CD4-positive, alpha-beta T cell (primary cell): ENCODE measurements at regions of chr10 and their contacts with region 1.

Region 1: DNA sequence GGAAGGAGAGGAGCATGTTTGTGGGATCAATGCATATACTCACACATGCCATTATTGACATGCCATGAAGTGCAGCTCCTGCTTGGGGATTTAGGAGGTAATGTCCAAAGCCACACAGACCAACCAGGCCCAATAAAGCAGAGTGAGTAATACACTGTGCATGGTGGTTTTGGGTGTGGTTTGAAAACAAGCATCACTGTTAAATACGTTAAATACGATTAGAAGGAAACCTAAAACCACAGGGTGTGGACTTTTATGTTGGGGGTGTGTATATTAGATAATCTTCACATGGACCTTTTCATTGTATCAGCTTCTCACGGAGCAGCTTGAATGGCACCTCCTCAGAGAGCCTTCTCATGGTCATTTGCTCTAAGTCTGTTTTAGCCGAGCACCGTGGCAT is 10.4 kb upstream of the EIF3A start:
- DNase-seq: peak in 13 of 14 experiments; percentile 14 to 94 (median 43)
- ATAC-seq: peak; percentile 88
- H3K4me3 ChIP-seq: no peak overlapping the region
- H3K4me3 Mint-ChIP-seq: peak overlapping the region; percentile 67
- H3K27ac ChIP-seq: peak overlapping the region; percentile 56 to 71
- H3K27ac Mint-ChIP-seq: peak overlapping the region; percentile 98
- H3K4me1 ChIP-seq: peaks cover 40% of the 10 kb centered on the region
- H3K4me1 Mint-ChIP-seq: peaks cover 42% of the 10 kb centered on the region
- H3K27me3 ChIP-seq: no peaks in the 10 kb centered on the region
- H3K27me3 Mint-ChIP-seq: no peaks in the 10 kb centered on the region
- CTCF ChIP-seq: no peak

Region 2: GRCh38 chr10:119080521-119081260 is 10.3 kb before region 1 on chr10 and contains the start of gene EIF3A:
- CTCF ChIA-PET with region 1: no interaction called
- POLR2A ChIA-PET with region 1: interaction called, 41 read pairs
- intact Hi-C with region 1: no loop called
- DNase-seq: peak; percentile 82 to 96 (median 88)
- ATAC-seq: peak; percentile 69
- H3K4me3 ChIP-seq: peak within 1 kb of the TSS; percentile 99
- H3K4me3 Mint-ChIP-seq: peak within 1 kb of the TSS; percentile 100
- H3K27ac ChIP-seq: peak within 1 kb of the TSS; percentile 92 to 96
- H3K27ac Mint-ChIP-seq: peak within 1 kb of the TSS; percentile 99
- H3K4me1 ChIP-seq: peaks cover 33% of the 10 kb centered on the region
- H3K4me1 Mint-ChIP-seq: peaks cover 64% of the 10 kb centered on the region
- H3K27me3 ChIP-seq: no peaks in the 10 kb centered on the region
- H3K27me3 Mint-ChIP-seq: no peaks in the 10 kb centered on the region
- CTCF ChIP-seq: no peak
- total RNA-seq, gene EIF3A: 129 TPM

Region 3: GRCh38 chr10:119103903-119104652 is 13.1 kb after region 1 on chr10 and contains the start of gene DENND10:
- CTCF ChIA-PET with region 1: interaction called, 4 read pairs
- POLR2A ChIA-PET with region 1: interaction called, 58 read pairs
- intact Hi-C with region 1: no loop called
- DNase-seq: peak; percentile 51 to 90 (median 71)
- ATAC-seq: peak; percentile 77
- H3K4me3 ChIP-seq: peak within 1 kb of the TSS; percentile 66
- H3K4me3 Mint-ChIP-seq: peak within 1 kb of the TSS; percentile 95
- H3K27ac ChIP-seq: peak within 1 kb of the TSS in 1 of 2 donors; percentile 40
- H3K27ac Mint-ChIP-seq: peak within 1 kb of the TSS; percentile 94
- H3K4me1 ChIP-seq: peaks cover 26% of the 10 kb centered on the region
- H3K4me1 Mint-ChIP-seq: peaks cover 13% of the 10 kb centered on the region
- H3K27me3 ChIP-seq: no peaks in the 10 kb centered on the region
- H3K27me3 Mint-ChIP-seq: no peaks in the 10 kb centered on the region
- CTCF ChIP-seq: no peak
- total RNA-seq, gene DENND10: 40.4 to 45.6 TPM

Region 4: DNA sequence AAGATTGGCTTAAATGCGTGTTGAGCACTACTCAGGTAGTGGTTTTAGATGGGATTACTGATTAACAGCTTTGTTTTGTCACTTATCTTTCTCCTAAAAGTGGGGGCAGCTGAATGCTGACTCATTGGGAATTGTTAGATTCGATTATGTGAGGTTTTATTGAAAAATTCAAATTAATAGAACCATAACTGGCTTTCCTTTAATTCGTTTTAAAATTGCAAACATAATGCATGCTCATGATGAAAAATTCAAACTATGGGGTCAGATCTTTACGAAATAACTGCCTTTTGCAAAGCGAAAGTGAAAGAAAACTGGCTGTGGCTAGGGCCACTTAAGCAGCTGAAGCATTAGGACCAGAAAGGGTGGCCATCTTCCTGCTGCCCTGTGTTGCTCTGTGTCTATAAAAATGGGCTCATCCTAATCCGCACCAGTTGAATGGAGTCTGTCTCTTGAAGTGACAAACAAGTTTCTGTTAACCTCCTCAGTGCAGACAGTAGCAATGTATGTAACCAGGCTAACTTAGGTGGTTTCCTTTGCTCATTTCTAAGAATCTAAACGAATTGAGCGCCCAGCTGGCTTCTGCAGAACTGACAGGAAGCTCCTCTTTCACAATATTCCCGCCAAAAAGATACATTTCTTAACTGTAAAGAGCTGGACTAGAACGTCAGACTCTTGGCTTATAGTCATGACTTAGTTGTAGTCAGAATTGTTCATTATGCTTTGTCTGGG is 40.7 kb after region 1 on chr10:
- CTCF ChIA-PET with region 1: no interaction called
- POLR2A ChIA-PET with region 1: interaction called, 10 read pairs
- intact Hi-C with region 1: loop called in 1 of 2 experiments (anchors 5 kb)
- DNase-seq: peak in 8 of 14 experiments; percentile 3 to 70 (median 22)
- ATAC-seq: peak; percentile 87
- H3K4me3 ChIP-seq: peak overlapping the region; percentile 58
- H3K4me3 Mint-ChIP-seq: peak overlapping the region; percentile 83
- H3K27ac ChIP-seq: peak overlapping the region; percentile 40 to 57
- H3K27ac Mint-ChIP-seq: peak overlapping the region; percentile 86
- H3K4me1 ChIP-seq: peaks cover 39% of the 10 kb centered on the region
- H3K4me1 Mint-ChIP-seq: peaks cover 39% of the 10 kb centered on the region
- H3K27me3 ChIP-seq: no peaks in the 10 kb centered on the region
- H3K27me3 Mint-ChIP-seq: no peaks in the 10 kb centered on the region
- CTCF ChIP-seq: no peak